BJ (cell line): ENCODE measurements at regions of chr15 and their contacts with region 1.

Region 1: DNA sequence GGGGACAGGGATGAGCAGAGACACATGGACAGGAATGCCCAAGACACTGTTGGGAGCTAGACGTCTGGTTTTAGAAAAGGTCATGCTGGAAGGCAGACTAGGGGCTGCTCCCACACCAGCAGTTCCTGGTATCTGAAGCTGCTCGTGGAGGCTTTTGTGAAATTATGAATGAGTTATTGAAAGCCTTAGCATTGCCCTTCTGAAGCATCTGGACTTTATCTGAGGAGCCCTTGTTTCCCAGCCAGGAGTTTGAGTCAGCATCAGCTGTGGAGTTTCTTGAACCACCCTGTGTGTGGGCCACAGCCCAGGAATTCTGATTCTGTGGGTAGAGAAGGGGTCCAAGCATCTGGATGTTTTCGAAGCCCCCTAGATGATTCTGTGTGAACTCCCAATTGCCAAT is 258.7 kb downstream of the SLCO3A1 start:
- DNase-seq: no peak
- H3K4me3 ChIP-seq: no peak overlapping the region
- H3K27me3 ChIP-seq: no peaks in the 10 kb centered on the region
- CTCF ChIP-seq: no peak

Region 2: GRCh38 chr15:92097474-92098178 is 14.6 kb before region 1 on chr15:
- CTCF ChIA-PET with region 1: interaction called, 17 read pairs
- POLR2A ChIA-PET with region 1: no interaction called
- DNase-seq: no peak
- H3K4me3 ChIP-seq: no peak overlapping the region
- H3K27me3 ChIP-seq: no peaks in the 10 kb centered on the region
- CTCF ChIP-seq: peak; percentile 82